HCT116 (cell line): ENCODE measurements at regions of chr10 and their contacts with region 1.

Region 1: GRCh38 chr10:103888113-103888841 is 29.7 kb downstream of the STN1 start:
- DNase-seq: peak; percentile 61
- ATAC-seq: peak; percentile 68
- H3K4me3 ChIP-seq: no peak overlapping the region
- H3K27ac ChIP-seq: peak overlapping the region; percentile 7
- H3K4me1 ChIP-seq: peaks cover 43 to 52% of the 10 kb centered on the region in 2 experiments
- H3K27me3 ChIP-seq: no peaks in the 10 kb centered on the region
- CTCF ChIP-seq: peak in 2 of 3 experiments; percentile 85 to 99; a peak in 4 of 6 replicates
- POLR2A ChIP-seq: no peak
- RAD21 ChIP-seq: no peak

Region 2: GRCh38 chr10:103901299-103901698 is 13.0 kb after region 1 on chr10:
- CTCF ChIA-PET with region 1: interaction called, 25 read pairs
- POLR2A ChIA-PET with region 1: interaction called, 5 read pairs
- RAD21 ChIA-PET with region 1: no interaction called
- intact Hi-C with region 1: no loop called
- DNase-seq: no peak
- ATAC-seq: no peak
- H3K4me3 ChIP-seq: no peak overlapping the region
- H3K27ac ChIP-seq: no peak overlapping the region
- H3K4me1 ChIP-seq: peaks cover 56 to 57% of the 10 kb centered on the region in 2 experiments
- H3K27me3 ChIP-seq: no peaks in the 10 kb centered on the region
- CTCF ChIP-seq: 0 out of 6 replicates have a peak, but pooled peaks of 1 of the 3 experiments have one; percentile 14
- POLR2A ChIP-seq: no peak
- RAD21 ChIP-seq: peak; percentile 40; the same call in 1 of the 2 replicates

Region 3: GRCh38 chr10:104035194-104036068 is 147.2 kb after region 1 on chr10:
- CTCF ChIA-PET with region 1: interaction called, 4 read pairs
- POLR2A ChIA-PET with region 1: interaction called, 4 read pairs
- RAD21 ChIA-PET with region 1: interaction called in 1 of 2 experiments, 3 read pairs
- intact Hi-C with region 1: loop called (anchors 2 kb)
- DNase-seq: no peak
- ATAC-seq: no peak; the same call in 1 of the 2 replicates
- H3K4me3 ChIP-seq: no peak overlapping the region
- H3K27ac ChIP-seq: no peak overlapping the region
- H3K4me1 ChIP-seq: no peaks in the 10 kb centered on the region
- H3K27me3 ChIP-seq: no peaks in the 10 kb centered on the region
- CTCF ChIP-seq: no peak
- POLR2A ChIP-seq: no peak
- RAD21 ChIP-seq: no peak

Region 4: DNA sequence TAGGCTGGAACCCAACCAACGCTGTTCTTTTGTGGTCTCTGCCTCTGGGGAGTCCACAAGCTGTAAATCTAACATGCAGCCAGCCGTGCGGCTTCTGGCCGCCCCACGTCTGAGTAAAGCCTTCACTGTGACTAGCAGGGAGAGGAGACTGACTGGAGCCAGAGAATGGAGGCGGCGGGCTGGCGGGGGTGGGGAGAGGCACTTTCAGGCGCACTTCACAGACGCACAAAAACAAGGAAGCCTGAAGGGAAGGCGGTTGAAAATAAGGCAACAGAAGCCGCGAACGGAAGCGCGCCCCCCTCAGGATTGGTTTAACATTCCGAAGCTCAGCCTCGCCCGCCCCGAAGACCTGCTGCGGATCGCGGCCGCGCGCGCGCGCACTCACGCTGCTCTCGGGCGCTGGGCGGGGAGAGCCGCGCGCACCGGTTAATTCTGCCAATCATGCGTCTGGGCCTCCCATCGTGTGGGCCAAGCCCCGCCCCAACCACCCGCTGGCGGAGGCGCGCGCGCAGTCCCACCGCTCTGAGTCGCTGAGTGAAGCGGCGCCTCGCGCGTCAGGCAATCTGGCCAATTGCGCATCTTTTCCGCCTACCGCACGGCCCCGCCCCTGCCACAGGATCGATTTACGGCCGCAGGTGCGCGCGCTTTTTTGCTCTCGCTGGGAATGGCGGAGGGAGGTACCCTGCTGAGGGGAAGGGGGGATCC is 233.4 kb after region 1 on chr10 and contains the start of gene SFR1:
- CTCF ChIA-PET with region 1: interaction called, 19 read pairs
- POLR2A ChIA-PET with region 1: interaction called, 5 read pairs
- RAD21 ChIA-PET with region 1: interaction called in 1 of 2 experiments, 3 read pairs
- intact Hi-C with region 1: loop called (anchors 1 kb)
- DNase-seq: peak; percentile 99
- ATAC-seq: peak; percentile 85
- H3K4me3 ChIP-seq: peak within 1 kb of the TSS; percentile 83 to 86
- H3K27ac ChIP-seq: peak within 1 kb of the TSS; percentile 96
- H3K4me1 ChIP-seq: peaks cover 41 to 65% of the 10 kb centered on the region in 2 experiments
- H3K27me3 ChIP-seq: no peaks in the 10 kb centered on the region
- CTCF ChIP-seq: peak in 2 of 3 experiments; percentile 59 to 74; a peak in 4 of 6 replicates
- POLR2A ChIP-seq: peak; percentile 71
- RAD21 ChIP-seq: no peak
- total RNA-seq, gene SFR1: 38.5 TPM

Region 5: GRCh38 chr10:104146882-104147281 is 258.6 kb after region 1 on chr10:
- CTCF ChIA-PET with region 1: no interaction called
- POLR2A ChIA-PET with region 1: no interaction called
- RAD21 ChIA-PET with region 1: no interaction called
- intact Hi-C with region 1: no loop called
- DNase-seq: no peak
- ATAC-seq: no peak
- H3K4me3 ChIP-seq: no peak overlapping the region
- H3K27ac ChIP-seq: no peak overlapping the region
- H3K4me1 ChIP-seq: no peaks in the 10 kb centered on the region
- H3K27me3 ChIP-seq: no peaks in the 10 kb centered on the region
- CTCF ChIP-seq: no peak
- POLR2A ChIP-seq: no peak
- RAD21 ChIP-seq: no peak

Region 6: DNA sequence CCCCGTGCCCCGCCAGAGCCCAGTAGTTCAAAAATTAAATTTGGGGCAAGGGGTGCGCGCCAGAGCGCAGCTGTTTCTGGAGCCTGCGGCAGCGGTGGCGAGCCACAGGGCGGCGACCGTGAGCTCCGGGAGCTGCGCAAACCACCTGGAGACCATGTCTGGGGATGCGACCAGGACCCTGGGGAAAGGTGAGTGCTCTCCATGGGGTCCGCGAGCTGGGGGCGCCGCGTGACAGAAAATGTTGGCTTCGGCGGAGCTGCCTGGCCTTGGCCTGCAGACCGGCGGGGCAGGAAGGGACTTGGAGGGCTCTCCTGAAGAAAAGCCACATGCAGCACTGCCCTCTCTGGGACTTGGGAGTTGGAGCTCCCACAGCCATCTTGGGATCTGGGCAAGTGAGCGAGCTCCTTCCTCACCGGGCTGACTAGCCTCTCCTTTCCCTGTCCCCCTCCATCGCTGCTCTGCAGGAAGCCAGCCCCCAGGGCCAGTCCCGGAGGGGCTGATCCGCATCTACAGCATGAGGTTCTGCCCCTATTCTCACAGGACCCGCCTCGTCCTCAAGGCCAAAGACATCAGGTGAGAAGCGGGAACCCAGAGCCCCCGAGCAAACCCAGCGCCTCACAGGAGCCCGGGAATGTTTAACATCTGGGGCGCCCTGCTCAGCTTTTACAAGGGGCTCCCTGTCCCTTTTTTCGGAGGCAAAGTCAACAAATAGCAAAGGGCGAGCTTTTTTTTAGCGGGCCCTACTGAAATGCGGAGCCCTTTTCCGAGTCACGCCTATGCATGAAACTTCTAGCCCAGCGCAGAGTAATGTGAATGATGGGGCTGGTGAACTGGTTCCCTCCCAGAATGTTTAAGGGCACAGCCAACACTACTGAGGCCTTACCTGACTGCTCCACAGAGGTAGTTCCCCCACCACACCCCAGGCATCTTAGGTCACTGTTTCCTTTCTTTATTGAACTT is 386.8 kb after region 1 on chr10:
- CTCF ChIA-PET with region 1: interaction called, 47 read pairs
- POLR2A ChIA-PET with region 1: interaction called, 4 read pairs
- RAD21 ChIA-PET with region 1: interaction called in 1 of 2 experiments, 7 read pairs
- intact Hi-C with region 1: loop called (anchors 2 kb)
- DNase-seq: peak; percentile 68
- ATAC-seq: peak; percentile 94
- H3K4me3 ChIP-seq: peak overlapping the region; percentile 77 to 79
- H3K27ac ChIP-seq: peak overlapping the region; percentile 66
- H3K4me1 ChIP-seq: peaks cover 12 to 19% of the 10 kb centered on the region in 2 experiments
- H3K27me3 ChIP-seq: no peaks in the 10 kb centered on the region
- CTCF ChIP-seq: peak in 2 of 3 experiments; percentile 98 to 99; a peak in 4 of 6 replicates
- POLR2A ChIP-seq: peak; percentile 57
- RAD21 ChIP-seq: no peak